HepG2 (cell line): ENCODE measurements at regions of chr4 and their contacts with region 1.

Region 1: DNA sequence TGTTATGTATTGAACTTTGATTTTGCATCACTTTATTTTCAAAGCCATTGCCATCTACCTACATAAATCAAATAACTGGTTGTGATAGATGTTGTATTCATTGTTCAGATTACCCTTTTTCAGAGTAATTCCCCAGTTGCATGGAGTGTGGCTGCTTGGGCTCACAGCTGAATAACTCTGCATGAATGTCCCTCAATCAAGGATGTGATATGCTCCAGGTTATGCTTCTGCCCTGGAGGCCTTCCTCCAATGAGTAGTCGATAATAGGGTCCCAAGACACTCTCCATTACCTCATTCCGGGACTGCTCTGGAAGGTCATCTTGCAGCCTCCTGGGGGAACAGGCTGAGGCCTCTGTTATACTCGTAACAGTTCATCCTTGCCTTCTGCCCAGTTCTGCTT is 251.8 kb downstream of the ADGRL3 start:
- DNase-seq: no peak
- ATAC-seq: no peak
- H3K4me3 ChIP-seq: no peak overlapping the region
- H3K27ac ChIP-seq: no peak overlapping the region
- H3K4me1 ChIP-seq: no peaks in the 10 kb centered on the region
- H3K27me3 ChIP-seq: no peaks in the 10 kb centered on the region
- CTCF ChIP-seq: no peak
- EP300 ChIP-seq: no peak
- POLR2A ChIP-seq: no peak
- RAD21 ChIP-seq: no peak

Region 2: DNA sequence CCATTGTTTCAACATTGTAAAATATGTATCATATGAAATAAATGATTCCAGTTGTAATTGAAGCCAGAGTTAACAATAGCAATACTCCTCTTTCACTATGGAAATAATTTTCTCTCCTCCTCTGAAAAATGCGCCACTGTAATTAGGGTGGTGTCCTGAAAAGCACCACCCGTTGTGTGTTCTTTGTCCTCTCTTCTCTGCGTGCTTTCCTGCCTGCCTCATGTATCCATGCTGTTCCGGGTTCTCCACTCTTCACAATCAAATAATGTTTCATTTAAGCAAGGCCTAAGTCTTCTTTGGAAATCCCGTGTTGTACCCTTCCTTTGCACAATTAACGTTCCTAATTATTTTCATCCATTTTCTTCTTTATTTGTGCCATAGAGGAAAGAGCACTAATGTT is 41.5 kb after region 1 on chr4:
- CTCF ChIA-PET with region 1: no interaction called
- POLR2A ChIA-PET with region 1: no interaction called
- in situ Hi-C with region 1: no loop called
- intact Hi-C with region 1: loop called (anchors 1 kb)
- DNase-seq: no peak
- ATAC-seq: no peak
- H3K4me3 ChIP-seq: no peak overlapping the region
- H3K27ac ChIP-seq: no peak overlapping the region
- H3K4me1 ChIP-seq: no peaks in the 10 kb centered on the region
- H3K27me3 ChIP-seq: no peaks in the 10 kb centered on the region
- CTCF ChIP-seq: no peak
- EP300 ChIP-seq: no peak
- POLR2A ChIP-seq: no peak
- RAD21 ChIP-seq: no peak